Caco-2 (cell line): ENCODE measurements at regions of chr16 and their contacts with region 1.

Region 1: GRCh38 chr16:50830698-50831097 is 88.8 kb downstream of the CYLD start:
- DNase-seq: no peak
- H3K4me3 ChIP-seq: no peak overlapping the region
- H3K4me3 Mint-ChIP-seq: no peak overlapping the region
- H3K27ac Mint-ChIP-seq: no peak overlapping the region
- H3K4me1 ChIP-seq: no peaks in the 10 kb centered on the region
- H3K4me1 Mint-ChIP-seq: no peaks in the 10 kb centered on the region
- H3K27me3 ChIP-seq: peaks cover 1% of the 10 kb centered on the region; the same call in 1 of the 2 replicates
- H3K27me3 Mint-ChIP-seq: peaks cover 27% of the 10 kb centered on the region
- CTCF ChIP-seq: no peak

Region 2: GRCh38 chr16:50884066-50884860 is 53.6 kb after region 1 on chr16:
- CTCF ChIA-PET with region 1: no interaction called
- POLR2A ChIA-PET with region 1: no interaction called
- intact Hi-C with region 1: loop called (anchors 5 kb)
- DNase-seq: peak in 1 of 2 experiments; percentile 45
- H3K4me3 ChIP-seq: no peak overlapping the region
- H3K4me3 Mint-ChIP-seq: no peak overlapping the region
- H3K27ac Mint-ChIP-seq: no peak overlapping the region
- H3K4me1 ChIP-seq: no peaks in the 10 kb centered on the region
- H3K4me1 Mint-ChIP-seq: no peaks in the 10 kb centered on the region
- H3K27me3 ChIP-seq: no peaks in the 10 kb centered on the region
- H3K27me3 Mint-ChIP-seq: peaks cover 3% of the 10 kb centered on the region
- CTCF ChIP-seq: peak; percentile 37 to 38